ENCODE measurements at regions of chr1 and their contacts with region 1.

Region 1: DNA sequence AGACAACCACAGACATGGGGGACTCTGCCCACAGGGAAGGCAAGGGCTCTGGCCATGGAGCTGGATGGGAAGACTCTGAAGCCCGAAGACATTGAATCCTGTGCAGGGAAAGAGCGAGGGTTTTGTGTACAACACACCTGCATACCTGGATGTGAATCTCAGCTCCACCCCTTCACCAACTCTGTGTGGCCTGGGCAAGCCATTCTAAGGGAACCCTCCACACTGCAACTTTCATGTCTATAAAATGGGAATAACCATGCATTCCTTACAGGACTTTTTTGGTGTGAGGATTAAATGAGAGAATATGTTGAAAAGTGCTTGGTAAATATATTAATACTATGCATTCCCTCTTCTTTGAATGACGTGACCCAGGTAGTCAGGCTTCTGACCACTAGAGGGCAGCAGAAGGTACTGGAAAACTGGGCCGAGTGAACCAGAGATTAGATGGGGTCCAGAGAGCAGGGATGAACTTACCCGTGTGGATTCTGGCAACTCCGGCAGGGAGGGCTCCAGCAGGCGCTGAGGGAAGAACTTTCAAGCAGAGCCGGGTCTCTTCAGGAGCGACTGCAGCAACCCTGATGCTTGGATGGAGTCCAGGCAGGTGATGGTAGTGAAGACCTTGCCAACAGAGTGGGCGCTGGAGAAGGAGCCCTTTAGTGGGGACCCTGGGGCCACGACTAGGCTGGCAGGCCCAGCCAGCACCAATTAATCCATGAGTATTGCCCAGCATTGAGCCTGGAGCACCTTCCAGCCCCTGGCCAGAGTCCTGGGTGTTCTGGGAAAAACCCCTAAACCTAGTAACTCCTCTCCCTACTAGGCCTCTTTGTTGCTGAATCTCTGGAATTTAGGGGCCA is 834 bp upstream of the ELF3 start:
- DNase-seq: peak; percentile 95
- H3K4me3 Mint-ChIP-seq: no peak overlapping the region
- H3K27ac Mint-ChIP-seq: no peak overlapping the region
- H3K4me1 Mint-ChIP-seq: peaks cover 26% of the 10 kb centered on the region
- H3K27me3 Mint-ChIP-seq: no peaks in the 10 kb centered on the region
- CTCF ChIP-seq: peak; percentile 97

Region 2: DNA sequence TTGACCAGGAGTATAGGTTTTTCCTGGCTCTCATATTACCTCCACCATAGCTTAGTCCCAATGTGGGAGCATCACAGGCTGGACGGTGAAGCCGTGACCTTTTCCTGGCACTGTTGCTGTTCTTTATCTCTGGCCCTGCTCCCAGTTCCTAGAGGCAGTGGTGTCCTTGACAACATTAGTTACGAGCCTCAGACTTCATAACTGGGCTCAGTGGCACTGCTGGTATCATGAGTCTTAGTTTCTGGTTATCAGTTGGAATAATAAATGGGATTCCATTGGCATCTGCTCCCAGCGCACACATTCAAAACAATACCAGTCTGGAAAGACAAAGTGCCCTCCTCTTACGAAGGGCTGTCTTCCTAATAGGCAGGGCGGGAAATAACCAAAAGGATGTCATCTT is 19.1 kb before region 1 on chr1:
- CTCF ChIA-PET with region 1: interaction called, 41 read pairs
- POLR2A ChIA-PET with region 1: interaction called, 5 read pairs
- intact Hi-C with region 1: no loop called
- DNase-seq: no peak
- H3K4me3 Mint-ChIP-seq: no peak overlapping the region
- H3K27ac Mint-ChIP-seq: peak overlapping the region; percentile 16
- H3K4me1 Mint-ChIP-seq: peaks cover 14% of the 10 kb centered on the region
- H3K27me3 Mint-ChIP-seq: no peaks in the 10 kb centered on the region
- CTCF ChIP-seq: no peak

Region 3: GRCh38 chr1:202090997-202091396 is 81.4 kb after region 1 on chr1:
- CTCF ChIA-PET with region 1: interaction called, 7 read pairs
- POLR2A ChIA-PET with region 1: no interaction called
- intact Hi-C with region 1: loop called (anchors 1 kb)
- DNase-seq: peak; percentile 42
- H3K4me3 Mint-ChIP-seq: no peak overlapping the region
- H3K27ac Mint-ChIP-seq: no peak overlapping the region
- H3K4me1 Mint-ChIP-seq: peaks cover 14% of the 10 kb centered on the region
- H3K27me3 Mint-ChIP-seq: peaks cover 30% of the 10 kb centered on the region
- CTCF ChIP-seq: no peak

Region 4: GRCh38 chr1:202105539-202106276 is 96.2 kb after region 1 on chr1:
- CTCF ChIA-PET with region 1: interaction called, 1,380 read pairs
- POLR2A ChIA-PET with region 1: interaction called, 9 read pairs
- intact Hi-C with region 1: no loop called
- DNase-seq: peak; percentile 76
- H3K4me3 Mint-ChIP-seq: no peak overlapping the region
- H3K27ac Mint-ChIP-seq: peak overlapping the region; percentile 2
- H3K4me1 Mint-ChIP-seq: peaks cover 40% of the 10 kb centered on the region
- H3K27me3 Mint-ChIP-seq: no peaks in the 10 kb centered on the region
- CTCF ChIP-seq: no peak

Region 5: GRCh38 chr1:202112839-202113672 is 103.5 kb after region 1 on chr1:
- CTCF ChIA-PET with region 1: interaction called, 1,380 read pairs
- POLR2A ChIA-PET with region 1: interaction called, 35 read pairs
- intact Hi-C with region 1: no loop called
- DNase-seq: peak; percentile 27
- H3K4me3 Mint-ChIP-seq: no peak overlapping the region
- H3K27ac Mint-ChIP-seq: no peak overlapping the region
- H3K4me1 Mint-ChIP-seq: peaks cover 31% of the 10 kb centered on the region
- H3K27me3 Mint-ChIP-seq: no peaks in the 10 kb centered on the region
- CTCF ChIP-seq: no peak

Region 6: GRCh38 chr1:202122639-202123335 is 113.2 kb after region 1 on chr1 and contains the start of gene GPR37L1:
- CTCF ChIA-PET with region 1: interaction called, 1,380 read pairs
- POLR2A ChIA-PET with region 1: interaction called, 35 read pairs
- intact Hi-C with region 1: loop called (anchors 1 kb)
- DNase-seq: peak; percentile 30
- H3K4me3 Mint-ChIP-seq: no peak within 1 kb of the TSS
- H3K27ac Mint-ChIP-seq: no peak within 1 kb of the TSS
- H3K4me1 Mint-ChIP-seq: no peaks in the 10 kb centered on the region
- H3K27me3 Mint-ChIP-seq: peaks cover 17% of the 10 kb centered on the region
- CTCF ChIP-seq: peak; percentile 30
- total RNA-seq, gene GPR37L1: not detected in 2 replicates

Measured in MCF 10A (cell line).